Uterus (tissue), 4 donors: ENCODE measurements at regions of chr5 and their contacts with region 1.

Region 1: GRCh38 chr5:157511651-157512644 is 51.9 kb downstream of the NIPAL4 start:
- DNase-seq: peak; percentile 95 to 98
- H3K4me3 ChIP-seq: no peak overlapping the region
- H3K27ac ChIP-seq: peak overlapping the region; percentile 77 to 81
- H3K4me1 ChIP-seq: peaks cover 0 to 11% of the 10 kb centered on the region in 2 donors
- H3K27me3 ChIP-seq: no peaks in the 10 kb centered on the region
- CTCF ChIP-seq: no peak
- POLR2A ChIP-seq: no peak

Region 2: GRCh38 chr5:157312492-157312891 is 199.5 kb before region 1 on chr5:
- intact Hi-C with region 1: no loop called
- DNase-seq: no peak
- H3K4me3 ChIP-seq: no peak overlapping the region
- H3K27ac ChIP-seq: no peak overlapping the region
- H3K4me1 ChIP-seq: no peaks in the 10 kb centered on the region
- H3K27me3 ChIP-seq: no peaks in the 10 kb centered on the region
- CTCF ChIP-seq: peak; percentile 18 to 39 (median 33)
- POLR2A ChIP-seq: no peak

Region 3: GRCh38 chr5:157354800-157355199 is 157.1 kb before region 1 on chr5:
- intact Hi-C with region 1: no loop called
- DNase-seq: no peak
- H3K4me3 ChIP-seq: no peak overlapping the region
- H3K27ac ChIP-seq: no peak overlapping the region
- H3K4me1 ChIP-seq: no peaks in the 10 kb centered on the region
- H3K27me3 ChIP-seq: no peaks in the 10 kb centered on the region
- CTCF ChIP-seq: no peak
- POLR2A ChIP-seq: no peak

Region 4: DNA sequence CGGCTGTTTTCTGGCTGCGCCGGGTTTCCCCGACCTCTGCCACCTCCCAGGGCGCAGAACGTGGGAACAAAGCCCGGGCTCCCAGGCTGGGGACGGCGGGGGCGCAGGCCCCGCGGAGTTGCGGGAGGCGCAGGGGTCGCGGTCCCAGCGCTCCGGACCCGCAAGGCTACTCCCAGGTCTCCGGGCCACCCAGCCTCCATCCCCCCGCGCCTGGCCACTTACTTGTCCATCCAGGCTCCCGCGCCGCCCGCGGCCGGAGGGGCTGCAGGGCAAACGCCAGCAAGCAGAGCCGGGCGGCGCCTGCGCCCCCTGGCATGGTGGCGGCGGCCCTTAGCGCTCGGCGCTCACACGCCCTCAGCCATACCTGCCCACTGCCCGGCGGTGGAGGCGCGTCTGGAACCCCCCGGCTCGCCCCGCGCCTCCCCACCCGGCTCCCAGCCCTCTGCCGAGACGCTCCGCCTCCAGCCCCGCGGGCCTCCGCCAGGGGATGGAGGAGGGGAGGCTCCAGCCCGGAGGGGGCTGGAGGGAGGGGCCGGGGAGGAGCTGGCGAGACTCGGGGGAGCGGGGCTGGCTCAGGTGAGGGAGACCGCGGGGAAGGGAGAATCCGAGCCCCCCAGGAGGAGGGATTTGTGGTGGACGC is 63.6 kb after region 1 on chr5 and contains the start of gene ADAM19:
- intact Hi-C with region 1: loop called (anchors 10 kb)
- DNase-seq: peak; percentile 59 to 67
- H3K4me3 ChIP-seq: peak within 1 kb of the TSS; percentile 70 to 80
- H3K27ac ChIP-seq: peak within 1 kb of the TSS; percentile 84 to 88
- H3K4me1 ChIP-seq: no peaks in the 10 kb centered on the region
- H3K27me3 ChIP-seq: no peaks in the 10 kb centered on the region
- CTCF ChIP-seq: peak in 3 of 4 experiments; percentile 1 to 37 (median 14)
- POLR2A ChIP-seq: peak in 1 of 2 donors; percentile 72
- total RNA-seq, gene ADAM19: 2.4 to 25.6 (median 15.3) TPM